Right cardiac atrium (tissue), 5 donors: ENCODE measurements at regions of chr16 and their contacts with region 1.

Region 1: DNA sequence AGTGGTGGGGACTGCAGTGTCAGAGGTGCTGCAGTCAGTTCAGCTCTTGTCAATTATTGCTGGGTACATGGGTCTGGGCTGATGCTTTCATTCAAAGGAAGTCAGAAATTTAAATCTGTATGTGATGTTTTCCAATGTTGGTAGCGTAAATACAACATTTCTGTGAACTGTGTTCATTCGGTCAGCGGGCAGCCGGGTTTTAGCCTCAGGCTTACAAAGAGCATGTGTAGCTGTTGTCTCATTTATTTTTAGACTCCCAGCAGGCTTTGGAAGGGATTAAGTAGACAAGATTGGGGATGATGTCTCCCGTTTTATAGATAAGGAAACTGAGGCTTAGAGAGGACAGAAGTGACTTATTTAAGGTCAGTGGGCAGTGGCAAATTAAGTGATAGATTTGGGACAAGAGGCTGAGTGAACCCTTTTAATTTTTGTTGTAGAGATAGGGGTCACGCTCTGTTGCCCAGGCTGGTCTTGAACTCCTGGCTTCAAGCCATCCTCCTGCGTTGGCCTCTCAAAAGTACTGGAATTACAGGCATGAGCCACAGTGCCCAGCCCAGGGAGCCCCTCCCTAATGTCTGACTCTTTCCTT is 8.1 kb downstream of the AQP8 start:
- DNase-seq: no peak
- ATAC-seq: no peak
- H3K4me3 ChIP-seq: no peak overlapping the region
- H3K27ac ChIP-seq: no peak overlapping the region
- H3K4me1 ChIP-seq: no peaks in the 10 kb centered on the region
- H3K27me3 ChIP-seq: no peaks in the 10 kb centered on the region

Region 2: DNA sequence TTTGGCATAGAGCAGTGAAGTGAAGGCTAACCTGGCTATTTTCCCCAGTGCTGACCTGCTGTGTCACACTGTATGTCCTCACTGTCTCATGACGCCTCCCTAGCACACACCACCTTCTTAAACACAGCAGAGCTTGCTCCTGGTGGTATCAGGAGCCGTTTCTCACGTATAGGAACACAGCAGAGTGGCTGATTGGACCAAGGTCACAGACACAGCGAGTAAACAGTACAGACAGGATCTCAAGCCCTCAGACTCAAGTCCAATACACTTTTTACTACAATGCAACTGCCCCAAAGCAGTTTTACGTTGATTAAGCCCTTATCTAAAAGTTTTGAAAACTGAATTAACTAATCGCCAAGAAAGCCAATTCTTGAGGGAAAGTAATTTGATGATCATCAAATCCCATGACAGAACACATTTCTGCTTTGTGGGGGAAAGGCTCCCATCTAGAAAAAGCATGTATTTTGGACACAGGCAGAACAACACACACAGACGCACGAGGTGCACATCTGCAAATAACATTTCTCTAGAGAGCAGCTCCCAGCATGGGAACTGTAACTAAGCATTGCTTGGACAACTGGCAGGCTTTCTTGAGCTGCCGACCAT is 224.9 kb before region 1 on chr16:
- intact Hi-C with region 1: no loop called
- DNase-seq: no peak
- ATAC-seq: peak; percentile 64 to 70
- H3K4me3 ChIP-seq: no peak overlapping the region
- H3K27ac ChIP-seq: peak overlapping the region; percentile 95
- H3K4me1 ChIP-seq: peaks cover 27% of the 10 kb centered on the region
- H3K27me3 ChIP-seq: no peaks in the 10 kb centered on the region

Region 3: DNA sequence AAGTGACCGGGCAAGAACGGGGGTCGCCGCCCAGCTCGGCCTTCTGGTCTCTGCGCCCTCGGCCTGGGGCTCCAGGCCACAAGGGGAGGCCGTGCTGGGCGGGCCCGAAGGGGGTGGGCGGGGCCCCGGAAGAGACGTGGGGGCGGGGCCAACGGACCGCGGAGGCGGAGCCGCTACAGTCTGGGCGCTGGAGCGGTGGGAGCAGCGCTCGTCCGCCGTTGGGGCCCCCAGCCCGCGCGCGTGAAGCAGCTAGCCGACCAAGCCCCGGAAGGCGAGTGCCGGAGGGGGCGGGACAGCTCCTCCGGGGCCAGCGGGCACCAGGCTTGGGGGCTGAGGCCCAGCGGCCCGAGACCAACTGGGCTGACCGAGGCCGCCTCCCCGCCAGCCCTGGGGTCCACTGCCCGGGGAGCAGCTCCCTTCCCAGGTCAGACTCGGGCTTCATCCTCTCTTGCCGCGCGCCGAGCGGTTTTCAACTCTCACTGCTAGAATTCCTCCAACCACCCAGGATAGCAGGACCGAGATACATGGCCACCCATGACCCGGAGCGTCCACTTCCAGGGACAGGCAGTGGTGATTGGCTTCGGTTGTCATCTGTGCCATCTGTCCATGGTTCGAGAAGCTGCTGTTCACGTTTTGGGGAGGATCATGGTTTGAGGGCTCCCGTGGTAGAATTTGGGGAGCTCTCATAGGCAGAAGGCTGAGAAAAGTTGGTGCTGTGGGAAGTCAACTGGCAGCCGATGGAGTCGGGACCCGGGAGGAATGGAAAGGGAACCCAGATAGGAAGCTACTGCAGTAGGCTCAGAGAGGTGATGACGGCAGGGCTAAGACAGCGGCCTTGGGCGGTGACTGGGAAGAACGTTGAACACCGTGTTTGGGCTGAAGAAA is 157.8 kb before region 1 on chr16:
- intact Hi-C with region 1: loop called in 1 of 4 experiments (anchors 10 kb)
- DNase-seq: peak; percentile 86 to 95 (median 93)
- ATAC-seq: peak; percentile 97 to 98
- H3K4me3 ChIP-seq: peak overlapping the region; percentile 63
- H3K27ac ChIP-seq: peak overlapping the region; percentile 82
- H3K4me1 ChIP-seq: peaks cover 2% of the 10 kb centered on the region
- H3K27me3 ChIP-seq: no peaks in the 10 kb centered on the region

Region 4: DNA sequence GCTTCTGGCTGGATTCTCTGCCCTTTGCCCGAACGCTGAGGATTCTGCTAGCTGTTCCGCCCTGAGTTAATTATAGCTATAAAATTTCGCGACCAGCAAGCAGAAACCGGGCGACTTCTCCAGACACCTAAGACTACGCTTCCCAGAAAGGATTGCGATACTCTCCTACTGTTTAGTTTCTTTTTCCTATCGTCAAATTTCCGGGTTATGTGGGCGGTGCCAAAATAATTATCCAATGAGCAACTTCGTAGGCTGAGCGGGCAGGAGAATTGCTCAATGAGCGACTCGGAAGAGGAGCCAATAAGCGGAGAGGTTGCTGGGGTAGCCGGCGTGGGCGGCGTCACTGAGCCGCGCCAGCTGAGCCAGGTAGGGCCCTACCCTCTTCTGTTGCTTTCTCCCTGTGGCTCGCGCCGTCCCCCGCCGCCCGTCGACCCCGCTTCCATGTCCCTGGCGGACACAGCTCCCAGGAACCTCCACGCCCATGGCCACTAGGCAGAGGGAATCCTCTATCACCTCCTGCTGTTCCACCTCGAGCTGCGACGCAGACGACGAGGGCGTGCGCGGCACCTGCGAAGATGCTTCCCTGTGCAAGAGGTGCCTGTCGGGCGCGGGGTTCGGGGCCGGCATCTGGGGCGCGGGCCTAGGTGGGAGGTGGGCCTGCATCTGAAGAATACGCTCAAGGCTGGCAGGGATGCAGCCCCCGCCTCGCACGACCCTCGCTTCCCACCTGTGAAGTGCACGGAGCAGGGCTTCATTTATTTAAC is 113.2 kb before region 1 on chr16 and contains the start of gene LCMT1:
- intact Hi-C with region 1: loop called in 1 of 4 experiments (anchors 10 kb)
- DNase-seq: peak; percentile 90 to 95 (median 94)
- ATAC-seq: peak; percentile 92 to 94
- H3K4me3 ChIP-seq: peak within 1 kb of the TSS; percentile 74
- H3K27ac ChIP-seq: peak within 1 kb of the TSS; percentile 85
- H3K4me1 ChIP-seq: peaks cover 2% of the 10 kb centered on the region
- H3K27me3 ChIP-seq: no peaks in the 10 kb centered on the region
- total RNA-seq, gene LCMT1: 34.2 to 41.6 (median 35.5) TPM

Region 5: GRCh38 chr16:25126820-25127232 is 98.0 kb before region 1 on chr16:
- intact Hi-C with region 1: loop called in 1 of 4 experiments (anchors 10 kb)
- DNase-seq: no peak
- ATAC-seq: peak; percentile 37 to 48
- H3K4me3 ChIP-seq: no peak overlapping the region
- H3K27ac ChIP-seq: no peak overlapping the region
- H3K4me1 ChIP-seq: no peaks in the 10 kb centered on the region
- H3K27me3 ChIP-seq: no peaks in the 10 kb centered on the region

Region 6: GRCh38 chr16:25317732-25318316 is 93.0 kb after region 1 on chr16:
- intact Hi-C with region 1: no loop called
- DNase-seq: no peak
- ATAC-seq: no peak
- H3K4me3 ChIP-seq: no peak overlapping the region
- H3K27ac ChIP-seq: no peak overlapping the region
- H3K4me1 ChIP-seq: no peaks in the 10 kb centered on the region
- H3K27me3 ChIP-seq: no peaks in the 10 kb centered on the region